Right lobe of liver (tissue), 6 donors: ENCODE measurements at regions of chr7 and their contacts with region 1.

Region 1: GRCh38 chr7:98021588-98022351 is 31.8 kb upstream of the OCM2 start:
- DNase-seq: peak; percentile 77 to 81 (median 80)
- ATAC-seq: peak; percentile 93 to 99 (median 97)
- H3K4me3 ChIP-seq: no peak overlapping the region
- H3K27ac ChIP-seq: no peak overlapping the region
- H3K4me1 ChIP-seq: no peaks in the 10 kb centered on the region
- H3K27me3 ChIP-seq: no peaks in the 10 kb centered on the region
- CTCF ChIP-seq: peak; percentile 87 to 98 (median 96)
- POLR2A ChIP-seq: no peak

Region 2: GRCh38 chr7:98168181-98168905 is 146.6 kb after region 1 on chr7:
- intact Hi-C with region 1: loop called (anchors 5 kb)
- DNase-seq: peak in 2 of 3 donors; percentile 50 to 71
- ATAC-seq: peak; percentile 61 to 76 (median 68)
- H3K4me3 ChIP-seq: no peak overlapping the region
- H3K27ac ChIP-seq: no peak overlapping the region
- H3K4me1 ChIP-seq: peaks cover 0 to 37% (median 15%) of the 10 kb centered on the region in 4 donors
- H3K27me3 ChIP-seq: no peaks in the 10 kb centered on the region
- CTCF ChIP-seq: peak; percentile 80 to 88 (median 84)
- POLR2A ChIP-seq: no peak

Region 3: DNA sequence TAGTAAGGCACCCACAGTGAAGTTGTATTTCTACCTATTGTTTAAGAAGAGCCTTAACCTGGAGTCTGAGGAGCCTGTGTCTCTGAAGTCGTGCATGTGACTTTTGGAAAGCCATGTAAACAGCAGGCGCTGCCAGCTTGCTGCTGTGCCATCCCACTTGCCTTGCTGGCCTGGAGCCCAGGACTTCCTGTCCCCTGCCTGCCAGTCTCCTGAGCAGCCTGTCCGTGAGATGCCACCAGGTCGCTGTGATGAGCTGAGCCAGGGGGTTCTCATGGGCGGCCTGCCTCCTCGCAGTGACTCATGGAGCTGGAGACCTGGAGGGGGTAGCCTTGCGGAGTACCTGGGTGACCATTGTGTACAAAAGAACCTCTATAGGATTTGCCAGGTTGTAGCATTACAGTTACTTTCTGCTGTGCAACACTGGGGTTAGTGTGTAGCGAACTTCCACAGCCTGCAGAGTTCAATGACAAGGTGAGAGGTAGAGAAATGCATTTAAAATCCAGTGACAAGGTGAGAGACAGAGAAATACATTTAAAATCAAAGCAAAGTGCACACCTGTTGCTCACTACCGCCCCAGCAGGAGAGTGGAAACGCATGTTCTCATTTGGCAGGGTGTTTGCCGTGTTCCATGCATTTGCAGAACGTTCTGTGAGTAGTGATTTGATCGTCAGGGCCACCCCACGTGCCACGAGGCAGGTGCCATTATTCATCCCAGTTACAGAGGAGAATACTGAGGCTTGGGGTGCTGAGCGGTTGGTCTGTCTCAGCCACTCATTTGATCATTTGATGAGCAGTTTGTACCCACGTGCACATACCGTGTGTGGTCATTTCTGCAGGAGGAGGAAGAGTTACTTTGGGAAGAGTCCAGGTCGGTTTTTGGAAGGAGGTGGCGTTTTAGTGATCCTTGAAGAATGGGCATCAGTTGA is 152.8 kb after region 1 on chr7:
- intact Hi-C with region 1: loop called (anchors 5 kb)
- DNase-seq: peak; percentile 84 to 93 (median 86)
- ATAC-seq: peak; percentile 78 to 91 (median 89)
- H3K4me3 ChIP-seq: no peak overlapping the region
- H3K27ac ChIP-seq: peak overlapping the region in 2 of 3 donors; percentile 42 to 58
- H3K4me1 ChIP-seq: peaks cover 0 to 25% (median 9%) of the 10 kb centered on the region in 4 donors
- H3K27me3 ChIP-seq: no peaks in the 10 kb centered on the region
- CTCF ChIP-seq: no peak
- POLR2A ChIP-seq: no peak